MCF 10A (cell line): ENCODE measurements at regions of chr10 and their contacts with region 1.

Region 1: GRCh38 chr10:8967061-8967460 is 912.6 kb downstream of the GATA3 start:
- DNase-seq: peak; percentile 70
- H3K4me3 Mint-ChIP-seq: no peak overlapping the region
- H3K27ac Mint-ChIP-seq: peak overlapping the region; percentile 29
- H3K4me1 Mint-ChIP-seq: peaks cover 42% of the 10 kb centered on the region
- H3K27me3 Mint-ChIP-seq: no peaks in the 10 kb centered on the region
- CTCF ChIP-seq: no peak

Region 2: DNA sequence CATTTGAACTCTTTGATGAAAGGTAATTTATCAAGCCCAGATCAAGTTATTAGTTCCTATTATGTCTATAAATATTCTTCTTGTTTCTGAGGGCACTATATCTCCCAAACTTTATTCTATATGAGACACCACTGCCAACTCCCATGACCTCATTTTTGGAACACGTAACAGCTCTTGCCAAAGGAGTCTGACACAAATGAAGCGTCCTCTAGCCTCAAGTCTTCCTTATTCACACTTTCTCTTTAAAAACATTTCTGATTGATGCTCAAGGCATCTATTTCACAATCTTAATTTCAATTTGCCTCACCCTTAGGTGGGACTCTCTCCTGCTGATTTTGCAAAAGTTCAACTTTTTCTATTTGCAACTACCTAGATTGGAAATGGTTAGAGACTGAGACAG is 64.1 kb before region 1 on chr10:
- CTCF ChIA-PET with region 1: interaction called, 3 read pairs
- POLR2A ChIA-PET with region 1: interaction called, 10 read pairs
- intact Hi-C with region 1: no loop called
- DNase-seq: peak; percentile 63
- H3K4me3 Mint-ChIP-seq: no peak overlapping the region
- H3K27ac Mint-ChIP-seq: peak overlapping the region; percentile 3
- H3K4me1 Mint-ChIP-seq: peaks cover 18% of the 10 kb centered on the region
- H3K27me3 Mint-ChIP-seq: no peaks in the 10 kb centered on the region
- CTCF ChIP-seq: no peak

Region 3: GRCh38 chr10:8913675-8914074 is 53.4 kb before region 1 on chr10:
- CTCF ChIA-PET with region 1: no interaction called
- POLR2A ChIA-PET with region 1: interaction called, 14 read pairs
- intact Hi-C with region 1: no loop called
- DNase-seq: peak; percentile 92
- H3K4me3 Mint-ChIP-seq: peak overlapping the region; percentile 5
- H3K27ac Mint-ChIP-seq: peak overlapping the region; percentile 4
- H3K4me1 Mint-ChIP-seq: peaks cover 11% of the 10 kb centered on the region
- H3K27me3 Mint-ChIP-seq: no peaks in the 10 kb centered on the region
- CTCF ChIP-seq: no peak

Region 4: DNA sequence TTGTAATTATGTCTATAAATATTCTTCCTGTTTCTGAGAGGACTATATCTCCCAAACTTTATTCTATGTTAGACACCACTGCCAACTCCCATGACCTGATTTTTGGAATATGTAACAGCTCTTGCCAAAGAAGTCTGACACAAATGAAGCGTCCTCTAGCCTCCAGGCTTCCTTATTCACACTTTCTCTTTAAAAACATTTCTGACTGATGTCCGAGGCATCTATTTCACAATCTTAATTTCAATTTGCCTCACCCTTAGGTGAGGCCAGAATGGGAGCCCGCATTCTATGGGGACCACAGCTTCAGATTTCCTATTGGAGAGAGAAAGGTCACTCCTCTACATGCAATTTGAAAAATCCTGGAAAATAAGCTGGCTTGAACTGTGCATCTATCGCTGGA is 39.4 kb before region 1 on chr10:
- CTCF ChIA-PET with region 1: interaction called, 6 read pairs
- POLR2A ChIA-PET with region 1: interaction called, 30 read pairs
- intact Hi-C with region 1: no loop called
- DNase-seq: peak; percentile 90
- H3K4me3 Mint-ChIP-seq: peak overlapping the region; percentile 24
- H3K27ac Mint-ChIP-seq: peak overlapping the region; percentile 60
- H3K4me1 Mint-ChIP-seq: peaks cover 22% of the 10 kb centered on the region
- H3K27me3 Mint-ChIP-seq: no peaks in the 10 kb centered on the region
- CTCF ChIP-seq: no peak

Region 5: GRCh38 chr10:9289811-9290210 is 322.8 kb after region 1 on chr10:
- CTCF ChIA-PET with region 1: no interaction called
- POLR2A ChIA-PET with region 1: no interaction called
- intact Hi-C with region 1: no loop called
- DNase-seq: peak; percentile 42
- H3K4me3 Mint-ChIP-seq: no peak overlapping the region
- H3K27ac Mint-ChIP-seq: no peak overlapping the region
- H3K4me1 Mint-ChIP-seq: no peaks in the 10 kb centered on the region
- H3K27me3 Mint-ChIP-seq: no peaks in the 10 kb centered on the region
- CTCF ChIP-seq: no peak